B cell (primary cell): ENCODE measurements at regions of chr6 and their contacts with region 1.

Region 1: DNA sequence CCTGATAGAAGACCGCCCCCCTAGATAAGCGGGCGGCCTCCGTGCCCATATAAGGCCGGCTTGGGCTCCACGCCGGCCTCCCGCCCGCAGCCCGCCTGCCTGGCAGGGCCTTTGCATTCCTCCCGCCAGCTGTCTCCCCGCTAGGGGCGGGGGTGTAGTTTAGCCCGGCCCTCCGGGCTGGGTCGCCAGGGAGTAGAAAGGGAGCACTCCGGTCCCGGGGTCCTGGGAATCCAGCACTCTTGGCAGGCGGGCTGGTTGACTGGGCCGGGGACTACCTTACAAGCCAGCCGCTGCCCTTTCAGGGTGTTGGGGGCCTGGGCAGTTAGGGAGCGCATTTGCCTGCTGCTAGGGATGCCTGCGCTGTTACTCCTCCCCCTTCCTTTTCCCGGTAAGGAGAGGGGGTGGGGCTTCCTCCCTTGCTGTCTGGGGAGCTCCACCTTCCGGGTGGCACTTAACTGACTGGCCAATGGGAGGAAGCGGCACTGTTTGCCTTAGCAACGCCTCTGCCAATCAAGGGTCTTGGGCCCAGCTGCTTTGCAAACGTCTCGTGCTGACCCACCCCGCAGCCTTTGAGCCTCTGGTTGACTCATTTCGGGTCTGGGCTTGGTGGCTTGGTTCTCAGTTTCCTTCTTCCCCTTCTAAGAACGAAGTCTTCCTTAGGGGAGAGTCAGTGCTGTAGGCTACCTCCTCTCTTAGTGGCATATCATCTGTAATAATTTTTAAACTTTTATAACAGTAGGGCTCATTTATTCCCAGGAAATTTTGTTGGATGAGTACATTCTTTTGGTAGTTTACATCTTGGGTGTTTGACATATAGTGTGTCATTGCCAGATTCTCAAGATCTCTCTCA is 3.4 kb downstream of the SRF start:
- DNase-seq: peak; percentile 96
- ATAC-seq: peak; percentile 66
- H3K4me3 ChIP-seq: peak overlapping the region in 4 of 5 experiments; percentile 35 to 47 (median 38)
- H3K4me3 Mint-ChIP-seq: peak overlapping the region; percentile 85
- H3K27ac ChIP-seq: peak overlapping the region; percentile 78 to 90
- H3K27ac Mint-ChIP-seq: peak overlapping the region; percentile 95
- H3K4me1 ChIP-seq: peaks cover 35 to 49% of the 10 kb centered on the region in 2 donors
- H3K4me1 Mint-ChIP-seq: peaks cover 46% of the 10 kb centered on the region
- H3K27me3 ChIP-seq: peaks cover 0 to 2% (median 0%) of the 10 kb centered on the region in 4 experiments
- H3K27me3 Mint-ChIP-seq: no peaks in the 10 kb centered on the region
- CTCF ChIP-seq: no peak

Region 2: DNA sequence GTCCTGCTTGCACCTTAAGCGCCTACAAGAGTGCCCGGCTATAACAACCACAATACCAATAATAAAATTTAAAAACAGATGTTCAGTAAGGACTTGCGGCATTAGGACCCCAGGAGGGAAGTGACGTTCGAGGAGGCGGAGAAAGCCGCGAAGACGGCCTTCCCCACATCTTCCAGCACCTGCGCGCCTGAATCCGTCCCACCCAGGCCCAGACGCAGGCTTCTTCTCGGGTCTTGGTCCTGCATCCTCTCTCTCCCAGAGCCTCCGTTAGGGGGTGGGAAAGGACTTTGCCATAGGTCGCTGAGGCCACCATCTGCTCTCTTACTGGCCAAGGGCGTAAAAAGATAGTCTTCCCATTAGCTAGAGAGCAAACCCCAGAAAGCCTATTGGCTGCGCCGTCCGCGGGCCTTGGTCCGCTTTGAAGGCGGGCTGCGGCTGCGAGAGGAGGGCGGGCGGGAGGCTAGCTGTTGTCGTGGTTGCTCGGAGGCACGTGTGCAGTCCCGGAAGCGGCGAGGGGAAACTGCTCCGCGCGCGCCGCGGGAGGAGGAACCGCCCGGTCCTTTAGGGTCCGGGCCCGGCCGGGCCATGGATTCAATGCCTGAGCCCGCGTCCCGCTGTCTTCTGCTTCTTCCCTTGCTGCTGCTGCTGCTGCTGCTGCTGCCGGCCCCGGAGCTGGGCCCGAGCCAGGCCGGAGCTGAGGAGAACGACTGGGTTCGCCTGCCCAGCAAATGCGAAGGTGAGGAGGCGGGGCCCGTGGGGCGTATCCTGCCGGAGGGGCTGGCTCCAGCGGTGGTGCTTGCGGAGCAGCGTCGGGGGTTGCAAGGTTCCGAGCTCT is 245.3 kb before region 1 on chr6 and contains the start of gene CNPY3:
- CTCF ChIA-PET with region 1: no interaction called
- POLR2A ChIA-PET with region 1: no interaction called
- intact Hi-C with region 1: loop called (anchors 1 kb)
- DNase-seq: peak; percentile 97
- ATAC-seq: peak; percentile 75
- H3K4me3 ChIP-seq: peak within 1 kb of the TSS; percentile 86 to 89 (median 87)
- H3K4me3 Mint-ChIP-seq: peak within 1 kb of the TSS; percentile 100
- H3K27ac ChIP-seq: peak within 1 kb of the TSS; percentile 94 to 97
- H3K27ac Mint-ChIP-seq: peak within 1 kb of the TSS; percentile 100
- H3K4me1 ChIP-seq: peaks cover 44 to 49% of the 10 kb centered on the region in 2 donors
- H3K4me1 Mint-ChIP-seq: peaks cover 49% of the 10 kb centered on the region
- H3K27me3 ChIP-seq: no peaks in the 10 kb centered on the region
- H3K27me3 Mint-ChIP-seq: no peaks in the 10 kb centered on the region
- CTCF ChIP-seq: no peak
- total RNA-seq, gene CNPY3: 159 and 163 TPM in 2 replicates

Region 3: DNA sequence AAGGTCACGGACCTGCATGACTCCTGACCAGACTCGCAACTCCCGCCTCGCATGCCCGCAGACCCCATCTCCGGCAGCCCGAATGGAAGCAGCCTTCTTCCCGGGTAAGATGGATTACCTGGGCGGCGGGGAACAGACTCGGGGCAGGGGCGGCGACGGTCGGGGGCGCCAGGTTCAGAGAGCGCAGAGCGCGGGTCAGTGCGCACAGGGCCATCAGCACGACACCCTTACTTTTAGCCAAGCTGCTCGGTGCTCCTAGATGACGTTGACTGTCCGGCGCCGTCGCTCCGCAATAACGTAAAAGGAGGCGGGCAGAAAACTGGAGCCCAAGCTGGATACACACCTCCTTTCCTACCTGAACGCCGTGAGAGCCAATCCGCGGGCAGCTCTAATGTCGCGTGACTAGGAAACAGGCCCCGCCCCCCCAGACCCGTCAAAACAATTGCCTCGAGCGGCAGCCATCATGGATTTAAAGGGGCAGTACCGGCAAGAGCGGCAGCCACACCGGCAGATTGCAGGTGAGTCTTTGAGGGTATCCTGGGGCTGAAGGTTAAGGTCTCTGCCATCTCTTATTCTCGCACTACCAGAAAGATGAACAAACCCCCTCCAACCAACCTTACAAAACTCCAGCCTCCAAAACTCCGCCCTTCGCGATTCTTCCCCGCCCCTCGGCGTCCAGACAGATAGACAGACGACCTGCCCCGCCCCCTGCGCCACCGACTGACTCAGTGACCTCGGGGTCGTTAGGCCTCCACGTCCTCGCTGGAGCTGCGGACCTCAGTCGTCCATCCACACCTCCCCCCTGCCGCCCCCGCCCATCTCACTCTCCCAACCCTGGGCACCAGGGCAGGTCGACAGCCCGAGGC is 115.1 kb before region 1 on chr6 and contains the starts of genes KLC4 and MRPL2:
- CTCF ChIA-PET with region 1: no interaction called
- POLR2A ChIA-PET with region 1: no interaction called
- intact Hi-C with region 1: loop called (anchors 1 kb)
- DNase-seq: peak; percentile 98
- ATAC-seq: peak; percentile 96
- H3K4me3 ChIP-seq: peak within 1 kb of the TSS; percentile 76 to 96 (median 89)
- H3K4me3 Mint-ChIP-seq: peak within 1 kb of the TSS; percentile 99
- H3K27ac ChIP-seq: peak within 1 kb of the TSS; percentile 76 to 86
- H3K27ac Mint-ChIP-seq: peak within 1 kb of the TSS; percentile 100
- H3K4me1 ChIP-seq: peaks cover 17 to 23% of the 10 kb centered on the region in 2 donors
- H3K4me1 Mint-ChIP-seq: peaks cover 38% of the 10 kb centered on the region
- H3K27me3 ChIP-seq: no peaks in the 10 kb centered on the region
- H3K27me3 Mint-ChIP-seq: no peaks in the 10 kb centered on the region
- CTCF ChIP-seq: no peak
- total RNA-seq, gene KLC4: 52.7 and 61.9 TPM in 2 replicates
- total RNA-seq, gene MRPL2: 43.8 and 45.6 TPM in 2 replicates

Region 4: DNA sequence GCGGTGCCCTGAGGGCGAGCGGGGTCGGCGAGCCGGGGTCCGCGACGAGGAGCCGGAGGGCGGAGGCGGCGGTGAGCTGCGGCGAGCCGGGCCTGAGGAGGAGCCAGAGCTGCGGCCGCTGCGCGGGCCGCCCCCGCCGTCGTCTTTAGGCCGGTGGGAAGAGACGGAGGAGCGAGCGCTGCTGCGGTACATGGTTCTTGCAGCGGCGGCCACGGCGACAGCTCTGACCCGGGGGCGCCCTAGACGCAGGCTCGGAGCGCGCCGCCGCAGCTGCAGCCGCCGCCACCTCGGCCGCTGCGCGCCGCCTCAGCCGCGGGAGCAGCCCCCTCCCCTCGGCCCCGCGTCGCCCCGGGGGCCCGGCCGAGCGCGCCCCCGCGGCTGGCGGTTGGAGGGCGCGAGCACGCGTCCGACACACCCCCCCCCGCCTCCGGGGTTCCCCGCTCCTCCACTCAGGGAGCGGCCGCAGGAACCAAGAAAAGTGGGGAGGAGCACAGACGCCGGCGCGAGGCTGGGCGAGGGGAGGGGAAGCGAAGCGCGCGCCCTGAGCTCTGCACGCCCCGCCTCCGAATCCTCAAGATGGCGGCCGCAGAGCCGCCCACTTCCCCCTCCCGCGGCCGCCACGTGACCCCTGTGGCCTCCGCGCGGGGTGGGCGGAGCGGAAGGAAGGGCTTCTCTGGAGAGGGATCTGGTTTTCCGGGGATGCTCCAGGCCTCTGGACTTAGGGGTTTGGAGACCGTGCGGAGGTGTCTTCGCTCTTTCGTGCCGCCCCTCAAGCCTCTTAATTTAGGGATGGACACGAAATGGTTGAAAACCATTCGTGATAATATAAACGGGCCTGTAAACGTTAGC is 194.9 kb after region 1 on chr6 and contains the start of gene ZNF318:
- CTCF ChIA-PET with region 1: no interaction called
- POLR2A ChIA-PET with region 1: no interaction called
- intact Hi-C with region 1: loop called (anchors 2 kb)
- DNase-seq: peak; percentile 98
- ATAC-seq: peak; percentile 90
- H3K4me3 ChIP-seq: peak within 1 kb of the TSS; percentile 83 to 95 (median 88)
- H3K4me3 Mint-ChIP-seq: peak within 1 kb of the TSS; percentile 98
- H3K27ac ChIP-seq: peak within 1 kb of the TSS; percentile 92 to 94
- H3K27ac Mint-ChIP-seq: peak within 1 kb of the TSS; percentile 97
- H3K4me1 ChIP-seq: peaks cover 64 to 69% of the 10 kb centered on the region in 2 donors
- H3K4me1 Mint-ChIP-seq: peaks cover 72% of the 10 kb centered on the region
- H3K27me3 ChIP-seq: no peaks in the 10 kb centered on the region
- H3K27me3 Mint-ChIP-seq: no peaks in the 10 kb centered on the region
- CTCF ChIP-seq: no peak
- total RNA-seq, gene ZNF318: 79.7 and 80.9 TPM in 2 replicates

Region 5: DNA sequence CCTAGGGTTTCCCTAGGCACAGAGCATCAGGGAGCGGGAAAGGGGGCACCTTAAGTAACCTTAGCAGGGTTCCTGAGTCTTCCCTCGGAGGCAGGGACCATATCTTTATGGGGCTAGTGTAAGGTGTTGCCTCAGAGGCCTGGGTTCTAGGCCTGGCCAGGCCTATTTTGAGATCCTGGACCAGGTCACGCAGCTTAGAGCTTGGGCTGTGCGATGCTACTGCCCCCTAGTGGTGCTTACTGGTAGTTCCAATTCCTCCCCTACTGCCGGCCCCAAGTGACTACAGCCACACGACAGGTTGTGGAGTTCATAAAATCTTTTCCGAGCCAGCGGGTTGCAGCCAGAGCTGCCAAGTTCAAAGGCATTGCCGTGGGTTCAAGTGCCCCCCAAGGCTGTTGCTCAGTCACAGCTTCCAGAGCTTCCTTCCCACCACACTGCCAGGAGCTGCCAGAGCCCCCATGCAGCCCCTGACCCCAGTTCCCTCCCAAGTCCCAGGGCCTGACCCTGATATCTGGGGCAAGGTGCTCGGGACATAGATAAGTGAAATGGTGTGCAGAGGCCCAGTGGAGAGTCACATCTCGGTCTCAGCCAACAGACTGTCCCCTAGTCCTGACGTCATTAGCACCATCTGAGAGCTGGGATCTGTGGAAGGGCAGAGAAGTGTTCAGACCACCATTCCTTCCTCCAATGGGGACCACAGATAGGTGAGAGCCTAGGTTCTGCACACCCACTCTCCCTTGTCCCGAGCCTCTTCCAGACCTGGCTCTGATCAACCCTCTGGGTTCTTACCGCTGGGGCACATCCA is 332.4 kb after region 1 on chr6:
- CTCF ChIA-PET with region 1: interaction called, 5 read pairs
- POLR2A ChIA-PET with region 1: no interaction called
- intact Hi-C with region 1: loop called (anchors 2 kb)
- DNase-seq: peak; percentile 90
- ATAC-seq: peak; percentile 57
- H3K4me3 ChIP-seq: no peak overlapping the region
- H3K4me3 Mint-ChIP-seq: no peak overlapping the region
- H3K27ac ChIP-seq: no peak overlapping the region
- H3K27ac Mint-ChIP-seq: no peak overlapping the region
- H3K4me1 ChIP-seq: peaks cover 21 to 26% of the 10 kb centered on the region in 2 donors
- H3K4me1 Mint-ChIP-seq: peaks cover 27% of the 10 kb centered on the region
- H3K27me3 ChIP-seq: peaks cover 0 to 20% (median 8%) of the 10 kb centered on the region in 4 experiments
- H3K27me3 Mint-ChIP-seq: peaks cover 10% of the 10 kb centered on the region
- CTCF ChIP-seq: peak; percentile 92

Region 6: DNA sequence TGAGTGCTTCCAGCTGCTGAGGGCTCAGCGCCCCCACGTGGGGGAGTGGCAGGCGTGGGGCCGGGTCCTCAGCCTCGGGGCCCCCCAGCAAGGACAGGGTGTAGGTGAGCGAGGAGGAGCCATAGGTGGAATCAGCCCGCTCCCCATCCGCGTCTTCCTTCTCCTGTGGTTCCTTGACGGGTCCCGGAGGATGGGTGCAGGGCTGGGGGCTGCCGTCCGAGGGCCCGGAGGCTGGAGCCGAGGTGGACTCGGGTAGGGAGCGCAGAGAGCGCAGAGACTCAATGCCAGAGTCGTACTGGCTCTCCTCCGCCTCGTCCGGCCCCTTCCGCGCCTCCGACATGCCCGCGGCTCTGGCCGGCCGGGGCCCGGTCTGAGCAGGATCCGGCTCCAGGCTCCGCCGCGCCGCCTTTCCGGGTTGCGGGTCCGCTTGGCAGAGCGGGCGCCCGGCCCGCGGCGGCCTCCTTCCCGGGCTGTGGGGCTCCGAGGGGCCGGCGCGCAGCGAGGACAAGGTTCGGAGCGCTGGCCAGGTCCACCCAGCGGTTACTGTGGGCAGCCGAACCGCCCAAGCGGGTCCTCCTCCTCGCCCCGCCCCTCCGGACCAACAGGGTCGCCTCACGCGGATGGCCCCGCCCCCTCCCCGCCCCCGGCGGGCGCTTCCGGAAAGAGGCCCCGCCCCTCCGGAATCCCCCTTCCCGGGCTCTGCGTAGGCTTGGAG is 1090.7 kb after region 1 on chr6 and contains the start of gene NFKBIE:
- CTCF ChIA-PET with region 1: no interaction called
- POLR2A ChIA-PET with region 1: no interaction called
- intact Hi-C with region 1: loop called (anchors 5 kb)
- DNase-seq: peak; percentile 96
- ATAC-seq: peak; percentile 52
- H3K4me3 ChIP-seq: peak within 1 kb of the TSS; percentile 94 to 99 (median 98)
- H3K4me3 Mint-ChIP-seq: peak within 1 kb of the TSS; percentile 100
- H3K27ac ChIP-seq: peak within 1 kb of the TSS; percentile 96 to 98
- H3K27ac Mint-ChIP-seq: peak within 1 kb of the TSS; percentile 100
- H3K4me1 ChIP-seq: peaks cover 48 to 61% of the 10 kb centered on the region in 2 donors
- H3K4me1 Mint-ChIP-seq: peaks cover 69% of the 10 kb centered on the region
- H3K27me3 ChIP-seq: peaks cover 0 to 13% (median 4%) of the 10 kb centered on the region in 4 experiments
- H3K27me3 Mint-ChIP-seq: peaks cover 8% of the 10 kb centered on the region
- CTCF ChIP-seq: peak; percentile 66
- total RNA-seq, gene NFKBIE: 46.5 and 50.8 TPM in 2 replicates